ENCODE measurements at regions of chr1 and their contacts with region 1.

Region 1: GRCh38 chr1:85297855-85298629 is 21.6 kb upstream of the BCL10 start:
- H3K4me3 ChIP-seq: no peak overlapping the region; the same call in 1 of the 2 replicates
- H3K27ac ChIP-seq: peak overlapping the region; percentile 76
- H3K4me1 ChIP-seq: peaks cover 18% of the 10 kb centered on the region
- CTCF ChIP-seq: no peak

Region 2: GRCh38 chr1:85276215-85276977 is 21.6 kb before region 1 on chr1 and contains the start of gene BCL10:
- CTCF ChIA-PET with region 1: interaction called, 7 read pairs
- POLR2A ChIA-PET with region 1: interaction called, 19 read pairs
- H3K4me3 ChIP-seq: peak within 1 kb of the TSS; percentile 89
- H3K27ac ChIP-seq: peak within 1 kb of the TSS; percentile 91
- H3K4me1 ChIP-seq: peaks cover 8% of the 10 kb centered on the region
- CTCF ChIP-seq: no peak

Region 3: DNA sequence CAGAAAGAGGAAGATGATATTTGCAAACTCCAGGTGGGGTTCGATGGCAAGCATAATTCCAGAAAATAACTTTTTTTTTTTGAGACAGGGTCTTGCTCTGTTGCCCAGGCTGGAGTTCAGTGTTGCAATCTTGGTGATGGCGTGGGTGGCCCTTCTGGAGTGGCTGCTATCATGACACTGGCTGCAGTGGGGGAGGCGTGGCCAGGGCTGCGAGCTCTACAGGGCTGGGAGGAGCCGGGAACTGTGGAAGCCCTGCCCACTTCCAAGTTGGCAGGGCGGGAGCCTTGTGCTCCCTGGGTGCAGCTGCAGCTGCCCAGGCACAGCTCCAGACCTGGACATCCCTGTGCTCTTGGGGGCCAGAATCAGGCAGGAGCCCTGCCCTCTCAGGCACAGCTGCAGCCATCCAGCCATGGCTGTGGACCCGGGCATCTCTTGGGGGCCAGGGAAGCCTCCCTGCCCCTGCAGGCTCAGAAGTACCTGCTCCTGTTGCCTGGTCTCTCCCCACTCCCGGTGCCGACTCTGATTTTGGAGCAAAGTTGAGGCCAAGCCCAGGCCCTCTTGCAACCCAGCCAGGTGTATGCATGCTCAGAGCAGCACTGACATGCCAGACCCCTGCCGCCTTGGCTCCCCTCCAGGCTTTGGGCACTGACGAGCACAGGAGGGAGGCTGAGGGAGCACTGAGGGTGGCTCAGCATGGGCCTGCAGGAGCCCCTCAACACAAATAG is 14.4 kb before region 1 on chr1:
- CTCF ChIA-PET with region 1: interaction called, 12 read pairs
- POLR2A ChIA-PET with region 1: no interaction called
- H3K4me3 ChIP-seq: no peak overlapping the region
- H3K27ac ChIP-seq: no peak overlapping the region
- H3K4me1 ChIP-seq: no peaks in the 10 kb centered on the region
- CTCF ChIP-seq: no peak

Region 4: GRCh38 chr1:85315789-85316188 is 17.7 kb after region 1 on chr1:
- CTCF ChIA-PET with region 1: no interaction called
- POLR2A ChIA-PET with region 1: no interaction called
- H3K4me3 ChIP-seq: no peak overlapping the region
- H3K27ac ChIP-seq: no peak overlapping the region
- H3K4me1 ChIP-seq: peaks cover 7% of the 10 kb centered on the region; the same call in 1 of the 2 replicates
- CTCF ChIP-seq: no peak

Measured in HEK293 (cell line).